ENCODE measurements at regions of chr1 and their contacts with region 1.

Region 1: GRCh38 chr1:206128196-206128595 is 11.0 kb upstream of the AVPR1B start:
- DNase-seq: peak; percentile 63
- H3K4me3 ChIP-seq: no peak overlapping the region
- H3K27ac ChIP-seq: no peak overlapping the region
- H3K4me1 ChIP-seq: no peaks in the 10 kb centered on the region
- H3K27me3 ChIP-seq: no peaks in the 10 kb centered on the region
- CTCF ChIP-seq: no peak

Region 2: GRCh38 chr1:204902671-204903070 is 1225.5 kb before region 1 on chr1:
- CTCF ChIA-PET with region 1: no interaction called
- dilution Hi-C with region 1: no loop called
- in situ Hi-C with region 1: no loop called
- intact Hi-C with region 1: no loop called
- DNase-seq: no peak
- H3K4me3 ChIP-seq: no peak overlapping the region
- H3K27ac ChIP-seq: no peak overlapping the region
- H3K4me1 ChIP-seq: no peaks in the 10 kb centered on the region
- H3K27me3 ChIP-seq: peaks cover 2% of the 10 kb centered on the region
- CTCF ChIP-seq: no peak

Region 3: GRCh38 chr1:206430031-206430983 is 302.1 kb after region 1 on chr1:
- CTCF ChIA-PET with region 1: no interaction called
- dilution Hi-C with region 1: loop called (anchors 25 kb)
- in situ Hi-C with region 1: no loop called
- intact Hi-C with region 1: no loop called
- DNase-seq: peak; percentile 92
- H3K4me3 ChIP-seq: no peak overlapping the region
- H3K27ac ChIP-seq: peak overlapping the region; percentile 26
- H3K4me1 ChIP-seq: peaks cover 5% of the 10 kb centered on the region
- H3K27me3 ChIP-seq: no peaks in the 10 kb centered on the region
- CTCF ChIP-seq: no peak

Measured in mammary epithelial cell (primary cell).